Cardiac septum (tissue), 1 donor: ENCODE measurements at regions of chr5 and their contacts with region 1.

Region 1: DNA sequence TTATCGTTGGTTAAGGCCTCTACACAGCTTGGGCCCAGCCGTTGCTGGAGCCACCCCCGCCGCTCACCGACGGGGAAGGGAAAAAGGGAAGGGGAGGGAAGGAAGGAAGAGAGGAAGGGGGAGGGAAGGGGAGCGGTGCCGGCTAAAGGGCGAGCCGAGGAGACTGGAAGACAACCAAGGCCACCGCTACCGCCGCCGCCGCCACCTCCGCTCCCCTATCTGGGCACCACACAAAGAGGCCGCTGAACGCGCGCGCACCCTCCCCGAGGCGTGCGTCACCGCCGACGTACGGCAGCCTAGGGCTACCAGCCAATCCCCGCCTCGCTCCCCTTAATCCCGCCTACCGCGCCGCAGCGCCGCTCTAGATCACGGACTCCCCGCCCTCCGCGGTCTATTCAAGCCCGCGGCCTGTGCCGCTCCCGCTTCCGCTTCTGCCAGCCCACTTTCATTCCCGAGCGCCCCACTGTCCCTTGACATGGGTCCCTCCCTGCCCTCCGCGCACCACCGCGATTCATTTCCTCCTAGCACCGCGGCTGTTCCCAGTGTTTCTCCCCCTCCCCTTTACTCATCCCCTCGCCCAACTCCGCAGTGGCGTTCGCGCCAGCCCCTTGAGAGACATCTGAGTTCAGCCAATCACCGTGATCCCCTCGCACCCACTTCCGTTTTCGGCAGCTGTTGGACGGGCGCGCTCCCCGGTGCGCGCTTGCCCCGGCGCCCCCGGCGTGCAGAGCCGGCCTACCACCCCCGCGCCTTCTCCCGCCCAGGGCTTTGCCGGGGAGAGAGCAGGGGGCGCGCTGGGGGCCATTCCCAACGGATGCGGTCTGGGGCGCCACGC is at the start of gene HNRNPA0:
- DNase-seq: peak; percentile 98
- total RNA-seq, gene HNRNPA0: 20.0 TPM

Region 2: DNA sequence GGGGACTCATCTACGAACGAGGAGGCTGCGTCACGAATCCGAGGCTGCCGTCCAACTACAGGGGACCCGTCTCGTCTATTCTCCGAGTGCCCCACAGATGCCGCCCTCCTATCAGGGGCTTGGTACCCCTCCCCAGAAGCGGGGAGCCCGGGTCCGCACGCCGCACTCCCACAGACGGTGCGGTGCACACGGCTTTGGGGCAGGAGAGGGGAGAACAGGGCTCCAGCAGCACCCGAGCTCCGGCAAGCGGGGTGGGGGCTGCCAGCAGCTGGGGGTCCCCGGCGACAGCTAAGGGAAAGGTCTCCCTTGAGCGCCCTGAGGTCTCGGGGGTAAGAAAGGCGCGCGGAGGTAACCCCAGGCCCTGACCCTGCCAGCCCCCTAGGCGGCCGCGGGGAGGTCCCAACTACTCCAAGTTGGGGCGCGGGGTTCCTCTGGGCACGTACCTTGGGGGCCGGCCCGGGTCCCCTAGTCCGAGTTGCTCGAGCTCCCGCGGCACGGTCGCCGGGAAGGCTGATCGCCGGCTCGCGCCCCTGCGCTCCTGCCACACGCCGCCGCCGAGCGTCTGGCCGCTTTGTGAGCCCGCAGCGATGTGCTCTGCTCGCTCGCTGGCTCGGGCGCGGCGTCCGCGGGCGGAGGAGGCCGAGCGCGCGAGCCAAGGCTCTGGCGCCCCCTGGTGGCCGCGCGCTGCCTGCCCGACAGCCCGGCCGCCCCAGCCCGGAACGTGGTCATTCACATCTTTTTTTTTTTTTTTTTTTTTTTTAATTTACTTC is 255.4 kb before region 1 on chr5 and contains the start of gene SPOCK1:
- intact Hi-C with region 1: no loop called
- DNase-seq: no peak
- total RNA-seq, gene SPOCK1: 43.4 TPM

Region 3: GRCh38 chr5:137880313-137880712 is 126.0 kb after region 1 on chr5:
- intact Hi-C with region 1: no loop called
- DNase-seq: no peak

Region 4: DNA sequence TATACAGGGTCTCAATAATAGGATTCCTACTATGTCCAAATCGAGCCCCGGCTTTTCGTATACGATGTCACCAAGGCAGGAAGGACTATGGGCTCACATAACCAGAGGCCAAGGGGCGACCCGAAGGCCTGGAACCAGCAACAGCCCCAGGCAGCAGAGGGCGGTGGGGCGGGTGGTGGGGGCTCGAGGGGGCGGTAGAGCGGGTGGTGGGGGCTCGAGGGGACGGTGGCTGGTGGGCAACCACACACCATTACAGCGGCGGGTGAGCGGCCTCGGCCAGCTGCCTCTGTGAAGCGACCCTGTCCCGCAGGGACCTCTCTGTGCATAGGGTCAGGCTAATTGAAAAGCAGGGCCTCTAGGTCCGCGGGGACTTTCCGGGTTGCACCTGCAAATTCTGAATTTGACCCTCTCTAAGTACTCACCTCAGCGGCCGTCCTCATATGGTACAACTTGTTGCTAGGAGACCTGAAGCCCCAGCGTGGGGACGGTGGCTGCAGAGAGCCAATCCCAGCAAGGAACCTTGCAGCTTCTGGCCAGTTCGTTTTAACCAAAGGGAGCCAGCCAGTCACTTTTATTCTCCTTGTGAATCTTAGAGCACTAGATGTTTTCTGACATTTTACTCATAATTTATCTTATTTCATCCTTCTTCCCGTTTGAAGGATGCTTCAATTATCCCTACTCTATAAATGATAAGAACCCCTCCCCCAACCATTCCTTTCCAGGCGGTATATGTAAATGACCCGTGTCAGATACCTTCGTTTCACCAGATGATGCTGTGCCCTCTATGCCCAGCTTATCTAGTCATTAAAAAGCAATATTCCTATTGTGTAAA is 384.8 kb after region 1 on chr5 and contains the start of gene NME5:
- intact Hi-C with region 1: loop called (anchors 10 kb)
- DNase-seq: peak; percentile 80
- total RNA-seq, gene NME5: 2.0 TPM